Endothelial cell of umbilical vein (primary cell): ENCODE measurements at regions of chr7 and their contacts with region 1.

Region 1: GRCh38 chr7:86932038-86932512 is 127.4 kb downstream of the ELAPOR2 start:
- DNase-seq: peak; percentile 77
- H3K4me3 ChIP-seq: no peak overlapping the region
- H3K27ac ChIP-seq: peak overlapping the region; percentile 47
- H3K4me1 ChIP-seq: peaks cover 19% of the 10 kb centered on the region
- H3K27me3 ChIP-seq: no peaks in the 10 kb centered on the region
- CTCF ChIP-seq: no peak
- POLR2A ChIP-seq: no peak

Region 2: DNA sequence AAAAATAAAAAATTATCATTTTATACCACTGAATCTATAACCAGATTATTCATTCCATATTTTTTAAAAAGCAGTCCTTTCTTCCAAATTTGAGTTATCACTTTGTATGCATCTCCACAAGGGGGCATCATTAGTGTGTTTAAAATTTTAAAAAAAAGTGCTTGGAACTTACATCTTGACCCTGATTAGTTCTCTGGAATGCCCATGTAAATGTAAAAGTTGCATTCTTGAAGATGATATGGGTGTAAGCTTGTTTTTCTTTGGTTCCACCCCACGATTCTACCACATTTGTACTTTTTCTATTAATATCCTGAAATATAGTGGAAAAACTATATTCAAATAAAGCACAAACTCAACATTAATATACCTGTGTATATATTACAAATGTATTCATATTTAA is 17.5 kb before region 1 on chr7:
- CTCF ChIA-PET with region 1: interaction called, 12 read pairs
- POLR2A ChIA-PET with region 1: no interaction called
- dilution Hi-C with region 1: no loop called
- intact Hi-C with region 1: no loop called
- DNase-seq: peak; percentile 30
- H3K4me3 ChIP-seq: no peak overlapping the region
- H3K27ac ChIP-seq: no peak overlapping the region
- H3K4me1 ChIP-seq: no peaks in the 10 kb centered on the region
- H3K27me3 ChIP-seq: no peaks in the 10 kb centered on the region
- CTCF ChIP-seq: peak; percentile 28 to 39
- POLR2A ChIP-seq: no peak

Region 3: DNA sequence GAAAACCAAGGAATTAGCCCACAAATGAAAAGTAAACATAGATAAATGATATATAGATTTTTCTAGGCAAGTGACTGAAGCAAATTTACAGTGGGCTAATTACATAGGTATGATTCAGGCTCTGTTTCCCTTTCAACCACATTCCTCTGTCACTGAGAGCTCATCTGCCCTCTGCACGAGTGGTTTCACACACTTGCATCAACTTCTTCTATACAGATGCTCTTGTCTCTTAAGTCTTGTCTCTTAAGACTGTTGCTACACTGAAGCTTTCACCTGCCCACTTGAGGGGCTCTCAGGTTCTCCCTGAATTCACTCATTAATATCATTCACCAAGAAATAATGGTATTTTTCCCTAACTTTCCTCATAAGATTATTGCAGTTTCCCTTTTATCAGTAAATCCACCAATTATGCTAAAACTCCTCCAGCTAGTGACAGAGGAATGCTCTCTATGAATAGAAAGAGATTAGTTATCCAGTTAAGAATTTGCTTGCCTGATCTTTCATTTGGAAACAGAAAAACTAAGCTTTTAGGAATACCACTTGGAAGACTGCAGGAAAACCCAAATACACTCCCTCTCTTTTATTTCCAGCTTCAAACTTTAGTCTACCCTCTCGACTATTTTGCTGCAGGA is 31.6 kb after region 1 on chr7:
- CTCF ChIA-PET with region 1: no interaction called
- POLR2A ChIA-PET with region 1: no interaction called
- dilution Hi-C with region 1: no loop called
- intact Hi-C with region 1: no loop called
- DNase-seq: no peak
- H3K4me3 ChIP-seq: no peak overlapping the region
- H3K27ac ChIP-seq: no peak overlapping the region
- H3K4me1 ChIP-seq: no peaks in the 10 kb centered on the region
- H3K27me3 ChIP-seq: no peaks in the 10 kb centered on the region
- CTCF ChIP-seq: no peak
- POLR2A ChIP-seq: no peak

Region 4: DNA sequence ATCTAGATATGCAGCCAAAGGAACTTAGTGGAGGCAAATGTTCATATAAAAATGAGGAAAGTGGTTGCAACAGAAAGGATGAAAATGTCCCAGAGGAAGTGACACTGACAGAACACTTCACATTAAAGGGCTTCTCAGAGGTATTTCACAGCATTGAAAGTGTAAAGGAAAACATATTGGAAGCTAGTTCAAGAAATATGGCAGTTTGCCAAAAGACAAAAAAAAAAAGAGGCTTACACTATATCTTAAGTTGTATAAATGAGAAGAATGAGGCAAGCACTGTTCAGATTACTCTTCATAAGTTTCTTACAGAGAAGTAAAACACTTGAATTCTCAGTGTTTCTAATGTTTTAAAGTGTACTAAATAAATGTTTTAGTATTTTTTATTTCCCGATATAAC is 716.2 kb after region 1 on chr7:
- CTCF ChIA-PET with region 1: no interaction called
- POLR2A ChIA-PET with region 1: no interaction called
- dilution Hi-C with region 1: no loop called
- intact Hi-C with region 1: no loop called
- DNase-seq: peak; percentile 36
- H3K4me3 ChIP-seq: no peak overlapping the region
- H3K27ac ChIP-seq: no peak overlapping the region
- H3K4me1 ChIP-seq: peaks cover 22% of the 10 kb centered on the region
- H3K27me3 ChIP-seq: no peaks in the 10 kb centered on the region
- CTCF ChIP-seq: no peak
- POLR2A ChIP-seq: no peak